Motor neuron (in vitro differentiated cells): ENCODE measurements at regions of chr17 and their contacts with region 1.

Region 1: DNA sequence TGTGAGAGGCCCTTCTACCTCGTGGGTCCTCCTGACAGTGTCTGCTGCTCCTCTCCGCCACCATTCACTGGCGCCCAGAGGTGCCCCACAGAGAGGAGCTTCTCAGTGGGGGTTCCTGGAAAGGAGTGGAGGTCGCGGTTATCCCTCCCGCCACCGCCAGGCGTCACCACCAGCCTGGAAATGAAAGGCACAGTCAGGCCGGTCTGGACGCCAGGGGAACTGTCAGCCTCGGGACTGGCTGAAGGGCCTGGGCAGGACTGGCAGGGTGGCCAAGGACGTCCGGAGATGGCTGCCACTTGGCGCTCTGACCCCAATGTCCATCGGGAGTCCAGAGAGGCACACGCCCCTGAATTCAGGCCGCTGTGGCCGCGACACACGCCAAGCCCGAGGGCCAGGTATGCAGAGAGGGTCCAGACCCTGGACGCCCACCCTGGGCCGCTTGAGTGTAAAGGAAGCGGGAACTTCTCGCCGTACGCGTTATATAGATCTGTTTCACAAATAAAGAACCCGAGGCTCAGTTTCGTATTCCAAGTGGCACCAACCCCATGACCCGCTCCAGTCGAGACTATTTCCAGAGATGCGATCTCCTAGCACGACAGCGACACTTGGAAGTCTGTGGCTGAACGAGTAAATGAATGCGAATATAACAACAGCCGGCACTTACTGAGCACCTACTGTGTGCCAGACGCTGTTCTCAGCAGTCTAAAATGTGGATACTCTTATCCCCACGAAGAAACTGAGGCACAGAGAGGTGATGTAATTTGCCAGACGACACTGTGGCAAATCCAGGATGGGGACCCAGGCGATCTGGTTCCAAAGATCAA is 7.6 kb upstream of the NXPH3 start:
- ATAC-seq: peak; percentile 65 to 79 (median 72)
- H3K4me3 ChIP-seq: peak overlapping the region in 1 of 5 donors; percentile 14
- H3K27ac ChIP-seq: no peak overlapping the region
- H3K4me1 ChIP-seq: no peaks in the 10 kb centered on the region

Region 2: DNA sequence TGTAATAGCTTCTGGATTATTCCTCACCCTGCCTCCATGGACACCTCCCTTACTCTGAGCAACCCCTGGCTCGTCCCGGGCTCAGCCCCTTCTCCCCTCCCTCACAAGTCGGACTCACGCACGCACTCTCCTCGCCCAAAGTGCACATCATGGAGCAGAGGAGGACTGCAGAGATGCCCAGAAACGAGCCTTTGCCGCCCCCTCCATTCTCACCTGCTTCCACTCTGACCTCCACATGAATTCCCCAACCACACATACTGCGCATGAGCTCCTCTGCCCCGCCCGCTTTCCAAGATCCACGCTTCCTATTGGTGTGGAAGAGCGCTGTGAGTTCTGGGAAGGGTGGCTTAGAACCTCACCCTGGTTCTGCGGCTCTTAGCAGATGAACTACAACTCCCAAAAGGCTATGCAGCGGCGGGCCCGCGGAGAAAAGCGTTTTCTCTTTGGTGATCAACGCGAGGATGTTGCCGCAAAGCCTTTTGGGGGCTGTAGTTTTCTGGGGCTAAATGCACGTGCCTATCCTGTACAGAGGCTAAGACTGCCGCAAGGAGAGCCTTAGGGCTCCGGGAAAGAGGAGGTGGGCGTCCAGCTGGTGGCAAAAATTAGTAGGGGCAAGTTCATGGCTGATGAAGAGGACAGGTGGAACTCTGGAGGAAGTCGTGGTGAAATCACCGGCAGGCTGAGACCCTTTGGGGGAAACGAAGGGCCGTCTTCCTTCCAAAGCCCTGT is 153.3 kb before region 1 on chr17 and contains the start of gene PHB1:
- in situ Hi-C with region 1: loop called in 3 of 9 experiments (anchors 25 kb)
- ATAC-seq: peak; percentile 97 to 99 (median 99)
- H3K4me3 ChIP-seq: peak within 1 kb of the TSS; percentile 62 to 87 (median 76)
- H3K27ac ChIP-seq: peak within 1 kb of the TSS in 1 of 2 donors; percentile 13
- H3K4me1 ChIP-seq: peaks cover 0 to 5% of the 10 kb centered on the region in 2 donors
- total RNA-seq, gene PHB1: 63.4 to 196 (median 97.5) TPM

Region 3: GRCh38 chr17:49694847-49695683 is 127.0 kb after region 1 on chr17:
- in situ Hi-C with region 1: loop called in 7 of 9 experiments (anchors 5 to 10 kb)
- ATAC-seq: peak in 6 of 8 experiments; percentile 25 to 52 (median 34)
- H3K4me3 ChIP-seq: no peak overlapping the region
- H3K27ac ChIP-seq: no peak overlapping the region
- H3K4me1 ChIP-seq: no peaks in the 10 kb centered on the region

Region 4: GRCh38 chr17:49723423-49723822 is 155.3 kb after region 1 on chr17:
- in situ Hi-C with region 1: no loop called
- ATAC-seq: no peak
- H3K4me3 ChIP-seq: no peak overlapping the region
- H3K27ac ChIP-seq: no peak overlapping the region
- H3K4me1 ChIP-seq: peaks cover 0 to 2% of the 10 kb centered on the region in 2 donors

Region 5: GRCh38 chr17:49748791-49749190 is 180.7 kb after region 1 on chr17:
- in situ Hi-C with region 1: no loop called
- ATAC-seq: no peak
- H3K4me3 ChIP-seq: no peak overlapping the region
- H3K27ac ChIP-seq: no peak overlapping the region
- H3K4me1 ChIP-seq: no peaks in the 10 kb centered on the region

Region 6: DNA sequence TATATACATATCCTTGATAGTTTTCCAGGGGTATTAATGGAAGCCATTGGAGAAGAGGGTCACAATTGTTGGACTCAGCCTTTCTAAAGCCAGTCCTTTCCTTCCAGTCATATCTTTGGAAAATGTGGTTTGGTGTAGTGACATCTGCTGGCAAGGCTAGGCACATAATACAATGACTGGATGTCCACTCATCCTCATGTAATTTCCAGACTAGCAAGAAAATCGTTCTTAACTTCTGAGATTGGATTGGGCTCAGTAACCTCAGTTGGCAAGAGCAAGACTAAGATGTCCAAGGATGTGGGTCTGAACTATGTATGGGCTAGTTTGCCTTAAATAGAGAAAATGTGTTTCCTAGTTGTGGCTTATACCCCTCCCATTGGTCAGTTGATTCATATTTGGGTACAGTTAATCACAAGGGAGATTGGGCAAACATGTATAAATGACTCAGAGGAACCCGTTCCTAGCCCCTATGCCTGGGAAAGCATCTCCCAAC is 211.7 kb after region 1 on chr17:
- in situ Hi-C with region 1: no loop called
- ATAC-seq: peak in 4 of 8 experiments; percentile 30 to 67 (median 46)
- H3K4me3 ChIP-seq: no peak overlapping the region
- H3K27ac ChIP-seq: no peak overlapping the region
- H3K4me1 ChIP-seq: peaks cover 21 to 24% of the 10 kb centered on the region in 2 donors

Region 7: DNA sequence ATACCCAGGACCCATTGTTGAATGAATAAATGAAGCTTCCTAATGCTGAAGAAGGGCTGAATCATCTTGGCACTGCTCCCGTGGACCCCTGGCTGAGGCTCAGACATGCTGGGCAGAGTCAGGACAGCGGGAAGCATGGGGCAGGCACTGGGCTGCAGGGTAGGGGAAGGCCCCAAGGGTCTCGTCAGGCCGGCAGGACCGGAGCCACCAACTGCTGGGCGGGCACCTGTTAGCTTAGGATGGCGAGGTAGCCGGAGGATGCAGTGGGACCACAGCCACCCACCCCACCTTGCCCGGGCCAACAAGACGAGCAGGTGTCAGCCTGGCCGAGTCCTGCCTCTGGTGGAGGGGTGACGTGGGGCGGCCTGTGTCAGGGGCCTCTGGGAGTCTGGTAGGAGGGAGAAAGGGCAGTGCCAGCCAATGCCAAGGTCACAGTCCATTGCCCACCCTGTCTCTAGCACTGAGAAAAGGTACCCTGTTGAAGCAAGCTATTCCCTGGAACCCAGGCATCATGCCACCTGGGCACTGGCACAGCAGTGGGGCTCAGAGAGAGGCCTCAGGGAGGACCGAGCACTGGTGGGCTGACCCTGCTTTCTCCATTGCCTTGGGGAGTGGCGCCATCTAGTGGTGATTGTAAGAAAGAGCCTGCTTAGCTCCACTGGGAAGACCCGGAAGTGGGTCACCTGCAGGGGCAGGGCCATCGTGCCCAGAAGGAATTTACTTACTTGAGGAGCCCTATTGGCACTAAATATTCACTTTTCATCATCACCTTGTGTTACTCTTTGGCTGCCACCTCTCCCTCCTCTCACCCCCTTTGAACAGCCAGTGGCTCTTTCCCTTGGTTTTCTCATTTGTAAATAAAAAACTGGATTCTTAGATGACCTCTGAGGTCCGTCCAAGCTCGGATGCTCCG is 430.0 kb after region 1 on chr17:
- in situ Hi-C with region 1: loop called in 6 of 9 experiments (anchors 10 to 25 kb)
- ATAC-seq: peak; percentile 27 to 87 (median 76)
- H3K4me3 ChIP-seq: no peak overlapping the region
- H3K27ac ChIP-seq: no peak overlapping the region
- H3K4me1 ChIP-seq: peaks cover 0 to 12% of the 10 kb centered on the region in 2 donors